ENCODE measurements at regions of chr21 and their contacts with region 1.

Region 1: DNA sequence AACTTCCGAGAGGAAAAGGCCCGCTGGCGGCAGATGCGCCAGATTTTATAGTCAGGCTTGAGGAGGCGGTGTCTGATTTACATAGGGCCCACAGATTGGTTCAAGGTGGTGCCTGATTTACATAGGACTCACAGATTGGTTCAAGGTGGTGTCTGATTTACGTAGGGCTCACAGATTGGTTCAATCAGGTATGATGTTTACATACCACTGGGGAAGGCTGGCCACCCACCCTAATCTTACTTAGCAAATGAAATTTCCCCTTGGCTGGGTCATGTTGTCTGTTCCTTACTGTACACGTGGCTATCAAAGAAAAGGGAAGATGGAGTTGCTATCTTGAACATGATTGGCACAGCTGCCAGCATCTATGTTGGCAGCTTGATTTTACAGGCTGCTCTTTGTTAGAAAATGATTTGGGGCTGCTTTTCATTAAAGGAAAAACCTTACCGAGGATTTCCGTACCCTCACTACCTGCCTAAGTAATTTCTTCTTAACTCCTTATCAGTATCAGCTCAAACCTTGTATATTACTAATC is 96.3 kb downstream of the SETD4 start:
- DNase-seq: peak; percentile 23
- H3K4me3 Mint-ChIP-seq: no peak overlapping the region
- H3K27ac Mint-ChIP-seq: no peak overlapping the region
- H3K4me1 Mint-ChIP-seq: no peaks in the 10 kb centered on the region
- H3K27me3 Mint-ChIP-seq: peaks cover 27% of the 10 kb centered on the region
- CTCF ChIP-seq: no peak

Region 2: GRCh38 chr21:35528116-35529042 is 435.6 kb before region 1 on chr21:
- CTCF ChIA-PET with region 1: no interaction called
- POLR2A ChIA-PET with region 1: no interaction called
- intact Hi-C with region 1: loop called (anchors 10 kb)
- DNase-seq: no peak
- H3K4me3 Mint-ChIP-seq: peak overlapping the region; percentile 64
- H3K27ac Mint-ChIP-seq: no peak overlapping the region
- H3K4me1 Mint-ChIP-seq: no peaks in the 10 kb centered on the region
- H3K27me3 Mint-ChIP-seq: no peaks in the 10 kb centered on the region
- CTCF ChIP-seq: no peak

Region 3: GRCh38 chr21:35840197-35840799 is 123.7 kb before region 1 on chr21:
- CTCF ChIA-PET with region 1: no interaction called
- POLR2A ChIA-PET with region 1: no interaction called
- intact Hi-C with region 1: no loop called
- DNase-seq: peak; percentile 72
- H3K4me3 Mint-ChIP-seq: no peak overlapping the region
- H3K27ac Mint-ChIP-seq: no peak overlapping the region
- H3K4me1 Mint-ChIP-seq: no peaks in the 10 kb centered on the region
- H3K27me3 Mint-ChIP-seq: no peaks in the 10 kb centered on the region
- CTCF ChIP-seq: peak; percentile 78

Region 4: GRCh38 chr21:36047139-36047538 is 83.2 kb after region 1 on chr21:
- CTCF ChIA-PET with region 1: no interaction called
- POLR2A ChIA-PET with region 1: no interaction called
- intact Hi-C with region 1: no loop called
- DNase-seq: no peak
- H3K4me3 Mint-ChIP-seq: no peak overlapping the region
- H3K27ac Mint-ChIP-seq: no peak overlapping the region
- H3K4me1 Mint-ChIP-seq: no peaks in the 10 kb centered on the region
- H3K27me3 Mint-ChIP-seq: no peaks in the 10 kb centered on the region
- CTCF ChIP-seq: no peak

Measured in MCF 10A (cell line).